K562 (cell line): ENCODE measurements at regions of chr21 and their contacts with region 1.

Region 1: DNA sequence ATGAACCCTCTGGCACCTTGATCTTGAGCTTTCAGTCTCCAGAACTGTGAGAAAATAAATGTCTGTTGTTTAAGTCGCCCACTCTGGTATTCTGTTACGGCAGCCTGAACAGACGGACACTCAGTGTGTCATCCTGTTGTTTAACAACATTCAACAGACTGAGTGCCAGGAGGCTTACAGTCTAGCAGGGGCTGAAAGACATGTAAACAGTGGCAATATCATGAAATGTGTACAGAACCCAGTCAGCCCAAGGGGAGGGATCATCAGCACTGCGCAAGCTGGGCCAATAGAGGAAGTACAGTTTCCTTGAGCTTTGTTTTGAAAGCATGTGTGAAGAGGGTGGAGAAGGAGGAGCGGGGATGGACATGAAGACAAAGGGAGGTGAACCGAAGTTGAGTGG is 13.6 kb downstream of the DIP2A start:
- DNase-seq: no peak
- ATAC-seq: peak; percentile 65
- H3K4me3 ChIP-seq: no peak overlapping the region
- H3K27ac ChIP-seq: no peak overlapping the region
- H3K4me1 ChIP-seq: no peaks in the 10 kb centered on the region
- H3K27me3 ChIP-seq: no peaks in the 10 kb centered on the region
- CTCF ChIP-seq: no peak
- EP300 ChIP-seq: no peak
- POLR2A ChIP-seq: 0 out of 2 replicates have a peak, but pooled peaks have one; percentile 42
- RAD21 ChIP-seq: no peak

Region 2: DNA sequence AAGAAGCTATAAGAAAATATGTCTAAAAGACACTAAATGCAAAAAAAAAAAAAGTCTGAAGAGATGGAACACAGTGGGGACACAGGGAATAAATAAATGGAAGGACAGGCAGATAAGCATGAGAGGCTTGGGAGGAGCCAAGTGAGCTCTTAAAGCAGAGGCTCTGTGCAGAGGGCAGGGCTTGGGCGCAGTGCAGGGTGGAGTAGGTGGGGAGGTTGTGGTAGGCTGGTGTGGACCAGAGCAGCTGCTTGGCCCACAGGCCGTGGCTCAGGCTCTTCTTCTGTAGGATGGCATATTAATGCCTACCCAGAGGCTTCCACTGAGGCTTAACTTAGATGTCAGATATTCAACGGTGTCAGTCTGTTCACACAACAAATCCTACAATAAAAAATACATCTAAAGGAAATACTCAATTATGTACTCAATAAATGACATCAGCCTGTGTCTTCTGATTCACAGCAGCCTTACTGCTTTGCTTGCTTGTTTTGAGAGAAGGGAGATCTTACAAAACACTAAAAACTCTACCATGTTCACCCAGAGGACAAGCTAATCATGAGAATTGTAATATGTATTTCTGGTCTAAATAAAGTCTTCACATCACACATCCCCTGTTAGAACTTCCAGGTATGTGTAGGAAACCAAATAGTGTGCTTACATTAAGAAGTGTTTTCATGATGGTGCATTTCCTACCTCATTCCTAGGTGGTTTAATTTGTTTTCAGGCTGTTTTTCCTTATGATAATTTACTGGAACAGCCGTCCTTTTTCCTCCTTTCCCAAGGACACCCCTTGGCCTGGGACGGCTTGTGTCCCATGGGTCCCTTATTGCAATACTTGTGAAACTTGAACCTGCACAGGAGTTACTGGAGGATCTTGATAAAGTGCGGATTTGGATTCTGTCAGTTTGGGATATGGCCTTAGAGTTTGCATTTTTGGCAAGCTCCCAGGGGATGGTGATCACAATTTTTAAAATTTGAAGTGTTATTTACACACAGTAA is 11.4 kb after region 1 on chr21:
- CTCF ChIA-PET with region 1: no interaction called
- POLR2A ChIA-PET with region 1: interaction called, 15 read pairs
- in situ Hi-C with region 1: no loop called
- intact Hi-C with region 1: no loop called
- DNase-seq: no peak
- ATAC-seq: peak; percentile 86
- H3K4me3 ChIP-seq: no peak overlapping the region
- H3K27ac ChIP-seq: no peak overlapping the region
- H3K4me1 ChIP-seq: peaks cover 3 to 7% of the 10 kb centered on the region in 2 experiments; a peak in 1 of 5 replicates
- H3K27me3 ChIP-seq: no peaks in the 10 kb centered on the region
- CTCF ChIP-seq: no peak
- EP300 ChIP-seq: no peak
- POLR2A ChIP-seq: no peak
- RAD21 ChIP-seq: no peak

Region 3: DNA sequence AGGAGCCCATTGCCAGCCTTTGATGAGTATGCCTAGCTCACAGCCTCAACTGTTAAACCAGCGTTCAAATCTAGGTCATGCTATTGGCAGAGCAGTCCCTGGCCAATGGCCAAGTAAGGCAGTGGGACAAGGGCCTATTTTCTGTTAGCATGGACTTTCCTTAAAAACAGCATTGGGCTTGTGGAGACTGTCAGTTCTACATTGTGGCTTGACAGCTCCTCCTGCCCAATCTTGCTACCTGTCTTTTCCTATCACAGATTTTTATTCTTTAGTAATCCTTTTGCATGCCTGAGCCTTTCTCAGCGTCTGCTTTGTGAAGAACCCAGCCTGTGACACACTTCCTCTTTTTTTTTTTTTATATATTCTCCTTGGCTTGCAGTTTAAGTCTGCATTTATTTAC is 42.9 kb after region 1 on chr21:
- CTCF ChIA-PET with region 1: no interaction called
- POLR2A ChIA-PET with region 1: no interaction called
- in situ Hi-C with region 1: no loop called
- intact Hi-C with region 1: no loop called
- DNase-seq: no peak
- ATAC-seq: no peak
- H3K4me3 ChIP-seq: no peak overlapping the region
- H3K27ac ChIP-seq: no peak overlapping the region
- H3K4me1 ChIP-seq: peaks cover 3 to 13% of the 10 kb centered on the region in 2 experiments
- H3K27me3 ChIP-seq: no peaks in the 10 kb centered on the region
- CTCF ChIP-seq: no peak
- EP300 ChIP-seq: no peak
- POLR2A ChIP-seq: no peak
- RAD21 ChIP-seq: no peak

Region 4: DNA sequence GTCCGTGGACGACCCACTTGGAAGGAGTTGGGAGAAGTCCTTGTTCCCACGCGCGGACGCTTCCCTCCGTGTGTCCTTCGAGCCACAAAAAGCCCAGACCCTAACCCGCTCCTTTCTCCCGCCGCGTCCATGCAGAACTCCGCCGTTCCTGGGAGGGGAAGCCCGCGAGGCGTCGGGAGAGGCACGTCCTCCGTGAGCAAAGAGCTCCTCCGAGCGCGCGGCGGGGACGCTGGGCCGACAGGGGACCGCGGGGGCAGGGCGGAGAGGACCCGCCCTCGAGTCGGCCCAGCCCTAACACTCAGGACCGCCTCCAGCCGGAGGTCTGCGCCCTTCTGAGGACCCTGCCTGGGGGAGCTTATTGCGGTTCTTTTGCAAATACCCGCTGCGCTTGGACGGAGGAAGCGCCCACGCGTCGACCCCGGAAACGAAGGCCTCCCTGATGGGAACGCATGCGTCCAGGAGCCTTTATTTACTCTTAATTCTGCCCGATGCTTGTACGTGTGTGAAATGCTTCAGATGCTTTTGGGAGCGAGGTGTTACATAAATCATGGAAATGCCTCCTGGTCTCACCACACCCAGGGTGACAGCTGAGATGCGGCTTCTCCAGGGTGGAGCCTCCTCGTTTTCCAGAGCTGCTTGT is 195.6 kb after region 1 on chr21:
- CTCF ChIA-PET with region 1: no interaction called
- POLR2A ChIA-PET with region 1: no interaction called
- in situ Hi-C with region 1: no loop called
- intact Hi-C with region 1: no loop called
- DNase-seq: no peak
- ATAC-seq: no peak
- H3K4me3 ChIP-seq: no peak overlapping the region
- H3K27ac ChIP-seq: no peak overlapping the region
- H3K4me1 ChIP-seq: peaks cover 0 to 13% of the 10 kb centered on the region in 2 experiments; a peak in 1 of 5 replicates
- H3K27me3 ChIP-seq: no peaks in the 10 kb centered on the region
- CTCF ChIP-seq: no peak
- EP300 ChIP-seq: no peak
- POLR2A ChIP-seq: no peak
- RAD21 ChIP-seq: no peak